Heart left ventricle (tissue), 16 donors: ENCODE measurements at regions of chr2 and their contacts with region 1.

Region 1: GRCh38 chr2:37820471-37820986 is 104.6 kb upstream of the RMDN2 start:
- DNase-seq: no peak
- ATAC-seq: no peak
- H3K4me3 ChIP-seq: no peak overlapping the region
- H3K27ac ChIP-seq: no peak overlapping the region
- H3K4me1 ChIP-seq: peaks cover 0 to 21% (median 0%) of the 10 kb centered on the region in 12 donors
- H3K27me3 ChIP-seq: no peaks in the 10 kb centered on the region
- CTCF ChIP-seq: no peak
- POLR2A ChIP-seq: no peak

Region 2: GRCh38 chr2:37427241-37427640 is 393.3 kb before region 1 on chr2:
- intact Hi-C with region 1: loop called in 1 of 10 experiments (anchors 5 kb)
- DNase-seq: no peak
- ATAC-seq: no peak
- H3K4me3 ChIP-seq: no peak overlapping the region
- H3K27ac ChIP-seq: no peak overlapping the region
- H3K4me1 ChIP-seq: peaks cover 0 to 11% (median 0%) of the 10 kb centered on the region in 12 donors
- H3K27me3 ChIP-seq: no peaks in the 10 kb centered on the region
- CTCF ChIP-seq: no peak
- POLR2A ChIP-seq: no peak

Region 3: DNA sequence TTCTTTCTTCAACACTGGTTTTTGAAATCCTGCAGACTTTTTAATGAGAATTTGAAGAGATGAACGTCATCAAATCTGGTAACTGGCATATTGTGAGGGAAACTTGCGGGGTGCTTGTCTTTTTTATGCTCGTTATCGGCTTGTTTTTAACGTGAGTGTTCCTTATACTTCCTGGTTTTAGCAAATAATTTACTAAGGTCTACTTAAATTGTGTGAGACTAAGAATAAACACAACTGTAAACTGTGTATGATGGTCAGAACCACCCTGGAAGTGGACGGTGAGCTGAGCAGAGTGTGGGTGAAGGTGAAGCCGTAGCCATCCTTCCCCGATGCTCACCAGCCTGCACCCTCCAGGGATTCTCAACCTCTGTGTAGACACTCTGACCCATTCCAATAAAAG is 66.8 kb before region 1 on chr2:
- intact Hi-C with region 1: no loop called
- DNase-seq: no peak
- ATAC-seq: no peak
- H3K4me3 ChIP-seq: no peak overlapping the region
- H3K27ac ChIP-seq: no peak overlapping the region
- H3K4me1 ChIP-seq: peaks cover 0 to 6% (median 0%) of the 10 kb centered on the region in 12 donors
- H3K27me3 ChIP-seq: no peaks in the 10 kb centered on the region
- CTCF ChIP-seq: no peak
- POLR2A ChIP-seq: no peak

Region 4: DNA sequence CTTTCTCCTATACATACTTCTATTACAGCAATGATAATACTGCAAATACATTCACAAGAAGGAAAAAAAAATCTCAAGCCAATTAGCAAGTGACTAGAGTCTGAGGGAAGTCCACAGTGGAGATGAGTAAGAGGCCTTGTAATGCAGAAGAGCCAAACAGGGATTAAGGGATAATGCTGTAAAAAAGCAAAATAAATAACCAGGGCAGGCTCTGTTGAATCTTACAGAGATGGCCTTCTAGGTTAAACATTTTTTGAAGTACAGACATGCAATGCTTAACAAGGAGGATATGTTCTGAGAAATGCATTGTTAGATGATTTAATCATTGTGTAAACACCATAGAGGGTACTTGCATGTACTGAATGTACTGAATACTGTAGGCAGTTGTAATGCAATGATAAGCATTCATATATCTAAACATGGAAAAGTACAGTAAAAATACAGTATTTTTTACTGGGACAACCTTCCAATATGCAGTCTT is 17.6 kb before region 1 on chr2:
- intact Hi-C with region 1: no loop called
- DNase-seq: no peak
- ATAC-seq: no peak
- H3K4me3 ChIP-seq: no peak overlapping the region
- H3K27ac ChIP-seq: peak overlapping the region in 1 of 12 donors; percentile 22
- H3K4me1 ChIP-seq: peaks cover 0 to 3% (median 0%) of the 10 kb centered on the region in 12 donors
- H3K27me3 ChIP-seq: no peaks in the 10 kb centered on the region
- CTCF ChIP-seq: no peak
- POLR2A ChIP-seq: no peak